Activated CD4-positive, alpha-beta memory T cell treated with anti-CD3 and anti-CD28 coated beads for 36 hours (primary cell): ENCODE measurements at regions of chr11 and their contacts with region 1.

Region 1: DNA sequence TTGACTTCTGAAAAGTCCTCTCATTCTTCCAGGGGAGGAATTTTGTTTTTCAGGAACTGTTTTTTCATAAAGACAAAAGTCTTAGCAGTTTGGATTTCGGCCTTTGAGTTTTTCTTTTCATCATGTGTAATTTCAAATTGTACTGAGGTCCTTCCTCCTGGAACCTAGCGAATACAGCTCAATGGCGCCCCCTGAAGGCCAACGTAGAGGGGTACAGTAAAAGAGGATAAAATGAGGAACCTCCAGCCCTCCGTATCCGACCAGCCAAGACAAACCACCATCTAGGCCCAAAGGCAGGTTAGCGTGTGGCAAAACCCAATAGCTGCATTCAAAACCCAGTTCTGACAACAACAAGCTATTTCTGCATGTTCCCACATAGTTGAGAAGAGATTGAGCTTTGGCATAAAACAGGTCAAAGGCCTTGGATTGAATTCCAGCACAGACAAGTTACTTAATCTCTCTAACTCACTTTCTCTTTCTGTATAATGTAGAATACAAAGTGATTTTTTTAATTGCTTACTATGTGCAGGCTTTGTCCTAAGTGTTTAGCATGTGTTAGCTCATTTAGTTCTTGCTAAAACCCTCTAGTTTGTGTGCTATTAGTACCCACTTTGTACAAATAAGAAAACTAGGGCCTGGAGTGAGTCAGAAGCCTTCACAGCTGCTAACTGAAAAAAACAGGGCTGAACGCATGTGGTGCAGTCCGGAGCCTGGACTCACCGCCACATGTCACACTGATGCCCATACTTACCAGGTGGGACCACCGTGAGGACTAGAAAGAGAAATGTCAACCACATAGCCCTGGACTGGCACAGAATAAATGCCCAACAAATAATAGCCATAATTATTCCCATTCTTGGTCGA is 43.2 kb upstream of the ETS1 start:
- DNase-seq: peak; percentile 94
- H3K4me3 Mint-ChIP-seq: peak overlapping the region; percentile 65
- H3K27ac Mint-ChIP-seq: peak overlapping the region; percentile 92
- H3K4me1 Mint-ChIP-seq: peaks cover 66% of the 10 kb centered on the region
- H3K27me3 Mint-ChIP-seq: no peaks in the 10 kb centered on the region

Region 2: GRCh38 chr11:128026596-128026995 is 604.0 kb before region 1 on chr11:
- CTCF ChIA-PET with region 1: no interaction called
- POLR2A ChIA-PET with region 1: no interaction called
- intact Hi-C with region 1: loop called (anchors 1 kb)
- DNase-seq: no peak
- H3K4me3 Mint-ChIP-seq: no peak overlapping the region
- H3K27ac Mint-ChIP-seq: no peak overlapping the region
- H3K4me1 Mint-ChIP-seq: peaks cover 9% of the 10 kb centered on the region
- H3K27me3 Mint-ChIP-seq: peaks cover 3% of the 10 kb centered on the region

Region 3: DNA sequence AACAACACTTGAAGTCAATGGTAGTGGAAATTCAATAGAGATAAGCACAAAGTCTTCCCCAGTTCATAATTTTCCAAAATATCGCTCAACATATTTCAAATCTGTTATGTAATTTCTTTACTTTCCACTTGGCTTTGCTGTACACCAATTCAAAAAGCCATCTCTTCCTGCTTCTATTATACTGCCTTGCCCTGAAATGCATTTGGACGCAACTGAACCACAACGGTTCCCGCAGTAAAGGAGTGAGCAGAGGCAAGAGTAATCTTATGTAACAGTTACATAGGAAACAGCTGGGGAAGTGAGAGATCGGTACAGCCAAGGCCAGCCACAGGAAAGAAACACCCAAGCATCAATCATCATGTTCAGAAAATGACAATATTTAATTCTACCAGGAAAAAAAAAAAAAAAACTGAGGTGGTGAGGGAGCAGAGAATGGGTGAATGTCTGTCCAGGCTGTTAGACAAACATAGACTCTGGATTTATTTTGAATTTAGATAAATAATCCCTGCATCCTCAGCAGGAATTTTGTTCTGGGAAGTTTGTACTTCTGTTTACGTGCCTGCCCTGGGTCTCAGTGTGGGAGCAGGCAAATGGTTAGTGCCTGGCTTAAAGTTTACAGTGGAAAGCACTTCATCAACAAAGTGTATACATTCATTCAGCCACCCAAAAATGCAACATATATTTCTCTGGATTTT is 435.4 kb before region 1 on chr11:
- CTCF ChIA-PET with region 1: interaction called, 10 read pairs
- POLR2A ChIA-PET with region 1: no interaction called
- intact Hi-C with region 1: no loop called
- DNase-seq: peak; percentile 69
- H3K4me3 Mint-ChIP-seq: no peak overlapping the region
- H3K27ac Mint-ChIP-seq: peak overlapping the region; percentile 2
- H3K4me1 Mint-ChIP-seq: peaks cover 38% of the 10 kb centered on the region
- H3K27me3 Mint-ChIP-seq: no peaks in the 10 kb centered on the region

Region 4: DNA sequence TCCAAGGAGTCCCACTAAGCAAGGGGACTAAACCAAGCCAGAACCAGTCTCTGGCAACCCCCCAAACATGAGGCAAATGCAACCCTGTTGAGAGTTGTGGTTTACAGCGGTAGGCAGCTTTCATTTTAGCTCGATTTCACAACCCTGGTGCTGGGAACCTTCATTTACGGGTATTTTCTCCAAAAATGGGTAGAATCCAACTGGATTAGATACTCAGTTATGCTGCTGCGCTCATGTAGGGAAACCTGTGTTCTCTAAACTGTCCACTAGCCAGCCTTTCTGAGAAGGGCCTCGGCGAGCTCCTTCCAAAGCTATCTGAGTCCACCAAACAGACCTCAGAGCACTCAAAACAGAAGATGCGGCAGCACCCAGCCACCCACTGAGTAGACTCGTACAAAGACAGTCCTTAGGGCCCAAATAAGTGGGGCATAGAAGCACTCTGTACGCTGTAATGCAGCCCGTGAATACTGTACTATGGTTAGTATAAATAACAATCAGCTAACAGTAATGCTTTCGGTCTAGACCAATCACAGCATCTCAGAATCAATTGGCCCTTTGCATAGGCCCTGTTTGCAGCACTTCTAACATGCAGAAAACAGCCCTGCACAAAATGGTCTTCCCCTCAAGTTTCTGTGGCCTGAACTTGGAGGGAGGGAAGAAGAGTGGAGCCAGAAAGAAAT is 147.9 kb before region 1 on chr11:
- CTCF ChIA-PET with region 1: interaction called, 10 read pairs
- POLR2A ChIA-PET with region 1: interaction called, 4 read pairs
- intact Hi-C with region 1: no loop called
- DNase-seq: peak; percentile 80
- H3K4me3 Mint-ChIP-seq: peak overlapping the region; percentile 69
- H3K27ac Mint-ChIP-seq: peak overlapping the region; percentile 92
- H3K4me1 Mint-ChIP-seq: peaks cover 96% of the 10 kb centered on the region
- H3K27me3 Mint-ChIP-seq: no peaks in the 10 kb centered on the region

Region 5: DNA sequence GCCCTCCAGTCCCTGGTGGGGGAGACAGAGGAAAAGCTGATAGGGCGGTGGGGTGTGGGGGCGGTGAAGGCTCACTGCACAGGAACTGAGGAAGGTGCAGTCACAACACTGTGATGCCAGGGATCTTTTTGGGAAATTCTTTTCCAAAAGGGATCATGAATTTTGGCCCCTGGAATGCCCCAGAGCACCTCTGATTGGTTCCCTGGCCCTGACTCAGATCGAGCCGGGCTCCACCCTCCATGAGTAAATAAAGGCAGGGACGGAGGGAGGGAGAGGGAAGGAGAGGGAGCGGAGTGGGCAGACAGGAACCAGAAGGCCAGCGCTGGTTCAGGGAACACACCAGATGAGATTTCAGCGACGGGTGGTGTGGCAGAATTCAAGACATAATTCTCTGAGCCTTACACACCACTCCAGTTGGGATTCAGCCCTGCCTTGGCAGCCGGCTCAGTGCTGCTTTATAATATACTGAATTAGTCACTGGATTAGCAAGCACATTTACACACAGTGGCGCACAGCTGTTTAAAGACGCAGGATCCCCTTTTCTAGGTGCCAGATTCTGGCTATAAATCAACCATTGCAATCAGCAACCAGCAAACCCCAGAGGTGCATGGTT is 123.5 kb before region 1 on chr11:
- CTCF ChIA-PET with region 1: interaction called, 264 read pairs
- POLR2A ChIA-PET with region 1: interaction called, 14 read pairs
- intact Hi-C with region 1: loop called (anchors 1 kb)
- DNase-seq: peak; percentile 74
- H3K4me3 Mint-ChIP-seq: peak overlapping the region; percentile 77
- H3K27ac Mint-ChIP-seq: peak overlapping the region; percentile 96
- H3K4me1 Mint-ChIP-seq: peaks cover 90% of the 10 kb centered on the region
- H3K27me3 Mint-ChIP-seq: no peaks in the 10 kb centered on the region

Region 6: DNA sequence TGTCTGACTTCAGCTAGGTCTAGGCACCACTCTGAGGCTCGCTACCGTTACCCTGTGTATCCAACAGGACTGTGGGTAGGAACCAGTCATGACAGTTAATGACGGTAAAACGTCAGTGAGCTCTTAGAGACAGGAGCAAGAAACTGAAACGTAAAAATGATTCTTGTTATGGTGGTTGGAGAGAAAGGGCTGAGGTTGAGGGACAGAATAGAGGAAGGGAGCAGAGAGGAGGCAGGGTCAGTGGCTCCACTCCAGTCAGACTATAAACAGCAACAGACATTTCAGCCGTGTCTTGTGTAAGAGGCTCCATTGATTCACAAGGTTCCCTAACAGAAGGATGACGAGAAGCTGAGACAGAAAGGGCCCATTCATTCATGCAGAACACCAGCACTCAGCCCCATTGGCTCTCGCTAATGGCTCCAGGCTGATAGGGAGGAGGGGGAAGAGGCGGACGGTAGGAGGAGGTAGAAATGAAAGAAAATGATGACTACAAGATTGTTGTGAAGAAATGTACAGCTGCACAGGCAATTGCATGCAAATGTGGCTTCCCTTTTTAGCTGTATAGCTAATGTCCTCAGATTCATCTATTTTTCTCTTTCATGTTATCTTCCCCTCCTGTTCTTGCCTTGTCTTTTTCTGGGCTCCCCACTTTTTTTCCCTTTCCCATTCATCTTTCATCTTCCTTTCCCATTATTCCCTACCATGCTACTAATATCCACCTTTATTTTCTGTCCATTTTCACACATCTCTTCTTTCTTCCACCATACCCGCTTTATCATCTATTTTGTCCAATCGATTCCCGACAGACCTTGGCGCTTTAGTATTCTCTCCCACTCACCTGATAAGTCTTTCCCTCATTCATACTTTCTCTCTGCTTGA is 77.6 kb before region 1 on chr11:
- CTCF ChIA-PET with region 1: interaction called, 9 read pairs
- POLR2A ChIA-PET with region 1: interaction called, 14 read pairs
- intact Hi-C with region 1: no loop called
- DNase-seq: peak; percentile 72
- H3K4me3 Mint-ChIP-seq: peak overlapping the region; percentile 70
- H3K27ac Mint-ChIP-seq: peak overlapping the region; percentile 94
- H3K4me1 Mint-ChIP-seq: peaks cover 65% of the 10 kb centered on the region
- H3K27me3 Mint-ChIP-seq: no peaks in the 10 kb centered on the region

Region 7: GRCh38 chr11:128658502-128658901 is 27.9 kb after region 1 on chr11:
- CTCF ChIA-PET with region 1: no interaction called
- POLR2A ChIA-PET with region 1: no interaction called
- intact Hi-C with region 1: no loop called
- DNase-seq: no peak
- H3K4me3 Mint-ChIP-seq: no peak overlapping the region
- H3K27ac Mint-ChIP-seq: no peak overlapping the region
- H3K4me1 Mint-ChIP-seq: no peaks in the 10 kb centered on the region
- H3K27me3 Mint-ChIP-seq: peaks cover 4% of the 10 kb centered on the region

Region 8: DNA sequence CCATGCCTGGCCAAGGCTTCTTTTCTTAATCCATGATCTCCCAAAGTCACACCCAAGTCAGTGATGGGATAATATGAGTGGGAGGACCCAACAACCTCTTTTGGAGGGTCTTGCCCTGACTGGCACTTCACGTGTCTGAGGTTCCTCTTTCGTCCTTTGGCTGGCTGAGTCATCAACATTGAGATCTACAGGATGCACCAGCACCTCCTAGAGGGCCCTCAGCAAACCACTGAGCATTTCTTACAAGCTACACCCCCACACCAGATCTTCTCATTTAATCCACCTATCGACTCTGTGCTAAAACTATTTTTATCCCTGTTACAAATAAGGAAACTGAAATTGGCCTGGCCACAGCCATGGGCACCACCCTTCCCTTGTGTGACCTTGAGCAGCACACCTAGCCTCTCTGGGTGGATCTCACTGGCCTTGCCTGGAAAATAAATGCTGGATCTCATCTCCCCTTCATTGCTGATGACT is 126.7 kb after region 1 on chr11:
- CTCF ChIA-PET with region 1: interaction called, 31 read pairs
- POLR2A ChIA-PET with region 1: interaction called, 3 read pairs
- intact Hi-C with region 1: loop called (anchors 1 kb)
- DNase-seq: peak; percentile 84
- H3K4me3 Mint-ChIP-seq: peak overlapping the region; percentile 42
- H3K27ac Mint-ChIP-seq: peak overlapping the region; percentile 89
- H3K4me1 Mint-ChIP-seq: peaks cover 81% of the 10 kb centered on the region
- H3K27me3 Mint-ChIP-seq: no peaks in the 10 kb centered on the region